Activated CD4-positive, alpha-beta T cell treated with anti-CD3 and anti-CD28 coated beads, Interleukin-2, amount 10 ng/mL, durations not matched to agents 7 days and 5 days (primary cell): ENCODE measurements at regions of chr10 and their contacts with region 1.

Region 1: DNA sequence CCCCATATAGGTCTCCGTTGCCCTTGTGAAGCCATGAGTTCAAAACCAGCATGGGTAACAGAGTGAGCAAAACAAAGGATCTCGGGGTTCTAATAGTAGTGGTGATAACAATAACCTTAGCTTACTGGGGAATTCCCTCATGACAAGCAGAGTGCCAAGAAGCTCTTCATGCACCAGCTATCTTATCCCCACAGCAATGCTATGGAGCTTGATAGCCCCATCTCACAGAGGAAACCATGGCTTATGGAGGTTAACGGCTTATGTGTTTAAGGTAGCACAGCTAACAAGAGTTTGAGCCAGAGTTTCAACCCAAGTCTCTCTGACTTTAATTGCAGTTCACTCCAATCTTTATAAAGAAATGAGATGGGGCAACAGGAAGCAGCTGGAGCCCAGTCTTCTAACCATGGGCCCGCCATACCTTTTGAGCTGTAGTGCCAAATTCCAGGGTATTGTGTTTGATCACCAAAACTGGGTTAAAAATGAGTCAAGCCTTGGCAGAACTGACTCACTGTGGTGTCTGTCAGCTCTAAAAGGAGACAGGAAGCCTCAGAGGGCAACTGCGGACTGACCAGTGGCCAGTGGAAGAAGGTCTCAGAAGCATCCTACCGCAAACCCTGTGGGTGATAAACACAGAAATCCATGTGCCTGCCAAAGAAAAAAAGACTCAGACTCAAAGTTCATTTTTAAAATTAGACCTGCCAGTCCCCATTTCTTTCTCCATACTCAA is 16.5 kb upstream of the PLAU start:
- DNase-seq: no peak
- H3K4me3 Mint-ChIP-seq: no peak overlapping the region
- H3K27ac Mint-ChIP-seq: no peak overlapping the region
- H3K4me1 Mint-ChIP-seq: peaks cover 7% of the 10 kb centered on the region
- H3K27me3 Mint-ChIP-seq: peaks cover 13% of the 10 kb centered on the region

Region 2: DNA sequence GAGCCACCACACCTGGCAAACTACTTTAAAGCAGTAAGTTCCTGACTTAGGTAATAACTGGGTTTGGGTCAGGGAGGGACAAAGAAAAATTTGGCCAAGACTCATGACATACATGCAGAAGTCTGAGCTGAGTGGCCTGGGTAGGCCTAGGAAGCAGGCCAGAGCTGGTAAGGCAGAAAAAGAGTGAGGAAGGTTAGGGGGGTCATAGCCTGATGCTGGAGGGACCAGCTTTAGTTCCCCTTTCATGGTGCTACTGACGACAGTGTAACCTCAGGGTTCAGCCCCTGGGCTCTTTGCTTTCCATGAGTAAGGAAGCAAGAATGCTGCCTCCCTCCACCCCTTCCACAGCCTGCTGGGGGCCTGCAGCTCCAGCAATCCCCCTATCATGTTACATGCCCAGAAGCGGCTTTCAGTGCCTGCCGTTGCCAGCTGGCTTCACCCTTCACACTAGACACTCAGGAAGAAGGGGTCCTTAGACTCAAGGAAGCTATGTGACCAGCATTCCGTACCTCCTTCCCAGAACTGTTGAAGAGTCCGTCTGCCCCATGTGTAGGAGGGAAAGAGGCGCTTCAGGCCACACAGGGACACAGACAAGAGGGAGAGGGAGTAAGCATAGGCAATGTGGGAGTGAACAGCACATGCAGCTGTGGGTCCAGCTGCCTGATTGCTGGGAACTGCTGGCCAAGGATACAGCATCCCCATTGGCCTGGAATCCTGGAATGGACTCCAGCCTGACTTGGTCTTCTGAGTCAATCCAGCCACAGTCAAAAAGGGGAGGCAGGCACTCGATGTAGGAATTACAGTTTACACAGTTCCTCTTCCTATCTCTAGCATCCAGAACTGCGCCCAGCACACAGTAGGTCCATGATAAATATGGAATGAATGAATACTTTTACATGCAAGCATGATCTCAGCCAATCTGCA is 12.4 kb after region 1 on chr10:
- CTCF ChIA-PET with region 1: interaction called, 10 read pairs
- POLR2A ChIA-PET with region 1: no interaction called
- DNase-seq: no peak
- H3K4me3 Mint-ChIP-seq: no peak overlapping the region
- H3K27ac Mint-ChIP-seq: no peak overlapping the region
- H3K4me1 Mint-ChIP-seq: peaks cover 41% of the 10 kb centered on the region
- H3K27me3 Mint-ChIP-seq: peaks cover 40% of the 10 kb centered on the region